ENCODE measurements at regions of chr11 and their contacts with region 1.

Region 1: GRCh38 chr11:11787305-11788062 is 54.3 kb upstream of the USP47 start:
- DNase-seq: no peak

Region 2: GRCh38 chr11:10800292-10800691 is 987.2 kb before region 1 on chr11:
- intact Hi-C with region 1: loop called (anchors 5 kb)
- DNase-seq: no peak

Region 3: GRCh38 chr11:11028017-11028692 is 759.3 kb before region 1 on chr11:
- intact Hi-C with region 1: loop called (anchors 2 kb)
- DNase-seq: no peak

Region 4: GRCh38 chr11:11036848-11037732 is 750.4 kb before region 1 on chr11:
- intact Hi-C with region 1: loop called (anchors 2 kb)
- DNase-seq: no peak

Region 5: GRCh38 chr11:11798586-11799438 is 11.3 kb after region 1 on chr11:
- intact Hi-C with region 1: no loop called
- DNase-seq: no peak

Measured in cardiac septum (tissue), 1 donor.